ENCODE measurements at regions of chr1 and their contacts with region 1.

Region 1: GRCh38 chr1:171715813-171716251 is 26.0 kb downstream of the VAMP4 start:
- DNase-seq: peak; percentile 60
- H3K4me3 ChIP-seq: no peak overlapping the region
- H3K27ac ChIP-seq: no peak overlapping the region
- H3K4me1 ChIP-seq: peaks cover 8% of the 10 kb centered on the region
- H3K27me3 ChIP-seq: no peaks in the 10 kb centered on the region
- CTCF ChIP-seq: peak; percentile 24 to 35
- POLR2A ChIP-seq: no peak

Region 2: DNA sequence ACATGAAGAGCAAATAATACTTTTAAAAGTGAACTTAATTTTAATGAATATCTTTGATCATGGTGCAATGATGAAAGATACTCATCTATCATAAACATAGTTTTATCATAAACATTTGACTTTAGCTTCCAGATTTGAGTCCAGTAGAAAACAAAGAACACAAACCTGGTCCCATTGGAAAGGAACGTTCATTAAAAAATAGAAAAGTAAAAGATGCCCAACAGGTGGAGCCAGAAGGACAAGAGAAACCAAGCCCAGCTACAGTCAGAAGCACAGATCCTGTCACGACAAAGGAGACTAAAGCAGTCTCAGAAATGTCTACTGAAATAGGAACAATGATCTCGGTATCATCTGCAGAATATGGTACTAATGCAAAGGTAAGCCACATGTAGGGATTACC is 149.4 kb before region 1 on chr1:
- CTCF ChIA-PET with region 1: interaction called, 3 read pairs
- POLR2A ChIA-PET with region 1: no interaction called
- dilution Hi-C with region 1: no loop called
- intact Hi-C with region 1: loop called (anchors 10 kb)
- DNase-seq: no peak
- H3K4me3 ChIP-seq: no peak overlapping the region
- H3K27ac ChIP-seq: no peak overlapping the region
- H3K4me1 ChIP-seq: no peaks in the 10 kb centered on the region
- H3K27me3 ChIP-seq: no peaks in the 10 kb centered on the region
- CTCF ChIP-seq: peak in 1 of 2 donors; percentile 2
- POLR2A ChIP-seq: no peak

Region 3: DNA sequence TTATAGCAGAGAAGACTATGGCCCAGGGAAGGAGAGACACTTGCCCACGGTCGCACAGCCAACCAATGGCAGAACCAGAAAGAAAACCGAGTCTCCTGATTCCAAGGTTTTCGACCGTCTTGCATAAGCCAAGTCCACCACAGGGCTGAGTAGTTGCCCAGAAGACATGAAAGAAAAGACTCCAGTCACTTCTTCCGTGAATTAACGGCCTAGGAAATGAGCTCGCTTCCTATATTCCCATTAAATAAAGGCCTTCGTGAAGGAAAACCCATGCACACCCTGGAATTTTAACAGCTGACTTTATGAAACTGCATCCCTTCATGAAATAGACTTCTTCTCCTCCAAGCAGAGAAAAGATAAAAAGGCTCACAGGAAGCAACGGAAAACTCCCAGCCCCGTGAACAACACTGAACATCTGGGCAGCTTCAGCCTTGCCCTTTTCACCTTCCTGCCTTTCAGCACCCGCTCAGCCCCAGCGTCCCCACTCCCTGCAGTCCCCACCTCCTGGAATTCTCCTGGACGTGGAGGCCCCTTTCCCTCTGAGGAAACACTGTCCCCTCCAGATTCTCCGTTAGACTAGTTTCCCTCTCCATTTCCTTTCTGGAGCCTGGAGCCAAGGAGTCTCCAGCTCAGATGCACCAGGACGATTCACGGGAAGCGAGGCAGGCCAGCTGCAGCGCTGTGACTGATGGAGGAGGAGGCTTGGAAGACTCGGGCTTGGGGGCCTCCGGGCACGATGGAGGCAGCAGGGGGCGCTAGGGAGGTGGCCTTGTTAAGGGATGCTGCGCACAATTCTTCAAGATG is 60.7 kb before region 1 on chr1:
- CTCF ChIA-PET with region 1: interaction called, 34 read pairs
- POLR2A ChIA-PET with region 1: no interaction called
- dilution Hi-C with region 1: no loop called
- intact Hi-C with region 1: loop called (anchors 1 kb)
- DNase-seq: peak; percentile 72
- H3K4me3 ChIP-seq: no peak overlapping the region
- H3K27ac ChIP-seq: peak overlapping the region; percentile 63
- H3K4me1 ChIP-seq: peaks cover 17% of the 10 kb centered on the region
- H3K27me3 ChIP-seq: peaks cover 0 to 6% of the 10 kb centered on the region in 2 experiments
- CTCF ChIP-seq: peak; percentile 86 to 95
- POLR2A ChIP-seq: no peak

Region 4: GRCh38 chr1:171702598-171702997 is 13.2 kb before region 1 on chr1:
- CTCF ChIA-PET with region 1: interaction called, 18 read pairs
- POLR2A ChIA-PET with region 1: no interaction called
- dilution Hi-C with region 1: no loop called
- intact Hi-C with region 1: no loop called
- DNase-seq: no peak
- H3K4me3 ChIP-seq: no peak overlapping the region
- H3K27ac ChIP-seq: no peak overlapping the region
- H3K4me1 ChIP-seq: no peaks in the 10 kb centered on the region
- H3K27me3 ChIP-seq: no peaks in the 10 kb centered on the region
- CTCF ChIP-seq: no peak
- POLR2A ChIP-seq: no peak

Region 5: GRCh38 chr1:171741872-171742576 is 26.2 kb after region 1 on chr1 and contains the start of gene VAMP4:
- CTCF ChIA-PET with region 1: interaction called, 20 read pairs
- POLR2A ChIA-PET with region 1: interaction called, 4 read pairs
- dilution Hi-C with region 1: no loop called
- intact Hi-C with region 1: no loop called
- DNase-seq: peak; percentile 87
- H3K4me3 ChIP-seq: peak within 1 kb of the TSS; percentile 59 to 83 (median 81)
- H3K27ac ChIP-seq: peak within 1 kb of the TSS; percentile 57
- H3K4me1 ChIP-seq: peaks cover 31% of the 10 kb centered on the region
- H3K27me3 ChIP-seq: no peaks in the 10 kb centered on the region
- CTCF ChIP-seq: no peak
- POLR2A ChIP-seq: peak; percentile 60
- total RNA-seq, gene VAMP4: 10.1 and 10.4 TPM in 2 replicates

Region 6: GRCh38 chr1:171984850-171985485 is 269.1 kb after region 1 on chr1:
- CTCF ChIA-PET with region 1: interaction called, 28 read pairs
- POLR2A ChIA-PET with region 1: no interaction called
- dilution Hi-C with region 1: no loop called
- intact Hi-C with region 1: loop called (anchors 1 kb)
- DNase-seq: peak; percentile 36
- H3K4me3 ChIP-seq: no peak overlapping the region
- H3K27ac ChIP-seq: no peak overlapping the region
- H3K4me1 ChIP-seq: no peaks in the 10 kb centered on the region
- H3K27me3 ChIP-seq: no peaks in the 10 kb centered on the region
- CTCF ChIP-seq: peak; percentile 60 to 62
- POLR2A ChIP-seq: no peak